H1 (cell line): ENCODE measurements at regions of chr11 and their contacts with region 1.

Region 1: DNA sequence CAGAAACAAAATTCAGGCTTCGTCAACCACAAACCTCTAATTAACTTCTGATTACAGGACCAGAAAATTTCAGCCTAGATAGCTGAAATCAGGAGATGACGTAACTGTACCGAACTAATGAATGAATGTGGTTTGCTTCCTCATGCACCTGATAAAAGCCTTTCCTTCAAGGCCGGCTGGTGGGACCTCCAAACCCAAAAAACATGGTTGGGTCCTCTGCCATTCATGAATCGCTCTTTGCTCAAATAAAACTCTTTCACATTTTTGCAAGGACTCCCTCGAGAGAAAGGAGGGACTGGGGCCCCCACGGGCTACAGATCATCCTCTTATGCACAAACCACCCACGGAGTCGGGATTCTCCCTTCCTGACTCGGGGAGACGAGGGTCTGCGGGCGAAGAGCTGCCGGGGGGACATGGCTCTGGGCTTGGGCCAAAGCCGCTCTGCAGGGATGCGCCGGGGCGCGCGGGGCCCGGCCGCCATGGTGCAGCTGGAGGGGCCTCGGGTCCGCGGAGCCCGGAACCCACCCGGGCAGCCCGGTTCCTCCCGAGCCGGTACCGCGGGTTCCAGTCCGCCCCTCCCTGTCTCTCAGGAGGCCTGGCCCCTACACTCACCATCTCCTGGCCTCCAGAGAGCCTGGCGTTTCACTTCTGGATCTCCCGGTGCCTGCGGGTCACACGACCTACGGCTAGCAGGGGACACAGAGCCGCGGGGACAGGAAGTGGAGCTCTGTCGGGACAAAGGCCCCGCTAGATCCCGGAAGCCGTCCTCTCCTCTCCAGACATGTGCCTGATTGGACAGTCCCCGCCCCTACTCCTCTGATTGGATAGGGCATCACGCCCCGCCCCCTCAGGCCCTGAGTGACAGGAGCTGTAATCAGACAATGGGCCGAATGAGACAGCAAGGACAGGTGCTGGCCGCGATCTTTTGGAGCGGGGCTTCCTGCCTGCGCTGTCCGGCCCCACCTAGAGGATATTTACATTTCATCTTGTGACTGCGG is at the start of gene ZNF195:
- DNase-seq: peak; percentile 96 to 99
- H3K4me3 ChIP-seq: peak within 1 kb of the TSS; percentile 94 to 100 (median 97)
- H3K27ac ChIP-seq: peak within 1 kb of the TSS; percentile 88
- H3K4me1 ChIP-seq: peaks cover 7 to 23% (median 13%) of the 10 kb centered on the region in 4 experiments; a peak in 5 of 7 replicates
- H3K27me3 ChIP-seq: no peaks in the 10 kb centered on the region
- CTCF ChIP-seq: no peak
- EP300 ChIP-seq: no peak
- POLR2A ChIP-seq: peak; percentile 83 to 97
- RAD21 ChIP-seq: no peak
- total RNA-seq, gene ZNF195: 80.5 and 88.6 TPM in 2 replicates

Region 2: DNA sequence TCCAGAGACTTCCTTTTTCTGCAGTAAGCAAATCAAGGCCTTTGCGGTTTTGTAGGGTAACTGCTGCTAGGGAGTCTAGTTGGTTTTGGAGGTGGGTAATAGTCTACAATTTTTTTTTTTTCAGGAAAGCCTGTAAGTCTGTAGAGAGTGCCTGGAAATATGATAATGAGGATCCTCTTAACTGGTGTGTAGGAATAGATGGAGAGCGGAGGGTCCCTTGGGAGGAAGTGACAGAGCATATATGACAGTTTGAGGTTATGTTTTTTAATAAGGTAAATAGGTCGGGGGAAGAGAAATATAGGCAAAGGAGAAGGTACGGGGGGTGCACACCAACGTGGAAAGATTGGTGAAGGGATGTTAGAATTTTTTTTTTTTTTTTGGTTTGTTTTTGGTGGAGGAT is 25.7 kb before region 1 on chr11:
- CTCF ChIA-PET with region 1: interaction called, 5 read pairs
- POLR2A ChIA-PET with region 1: interaction called, 117 read pairs
- DNase-seq: no peak
- H3K4me3 ChIP-seq: no peak overlapping the region
- H3K27ac ChIP-seq: no peak overlapping the region
- H3K4me1 ChIP-seq: no peaks in the 10 kb centered on the region
- H3K27me3 ChIP-seq: no peaks in the 10 kb centered on the region
- CTCF ChIP-seq: no peak
- EP300 ChIP-seq: no peak
- POLR2A ChIP-seq: no peak
- RAD21 ChIP-seq: no peak

Region 3: GRCh38 chr11:3412837-3413236 is 34.1 kb after region 1 on chr11:
- CTCF ChIA-PET with region 1: interaction called, 34 read pairs
- POLR2A ChIA-PET with region 1: interaction called, 51 read pairs
- DNase-seq: no peak
- H3K4me3 ChIP-seq: no peak overlapping the region
- H3K27ac ChIP-seq: no peak overlapping the region
- H3K4me1 ChIP-seq: no peaks in the 10 kb centered on the region
- H3K27me3 ChIP-seq: no peaks in the 10 kb centered on the region
- CTCF ChIP-seq: no peak
- EP300 ChIP-seq: no peak
- POLR2A ChIP-seq: no peak
- RAD21 ChIP-seq: no peak